ENCODE measurements at regions of chr12 and their contacts with region 1.

Region 1: DNA sequence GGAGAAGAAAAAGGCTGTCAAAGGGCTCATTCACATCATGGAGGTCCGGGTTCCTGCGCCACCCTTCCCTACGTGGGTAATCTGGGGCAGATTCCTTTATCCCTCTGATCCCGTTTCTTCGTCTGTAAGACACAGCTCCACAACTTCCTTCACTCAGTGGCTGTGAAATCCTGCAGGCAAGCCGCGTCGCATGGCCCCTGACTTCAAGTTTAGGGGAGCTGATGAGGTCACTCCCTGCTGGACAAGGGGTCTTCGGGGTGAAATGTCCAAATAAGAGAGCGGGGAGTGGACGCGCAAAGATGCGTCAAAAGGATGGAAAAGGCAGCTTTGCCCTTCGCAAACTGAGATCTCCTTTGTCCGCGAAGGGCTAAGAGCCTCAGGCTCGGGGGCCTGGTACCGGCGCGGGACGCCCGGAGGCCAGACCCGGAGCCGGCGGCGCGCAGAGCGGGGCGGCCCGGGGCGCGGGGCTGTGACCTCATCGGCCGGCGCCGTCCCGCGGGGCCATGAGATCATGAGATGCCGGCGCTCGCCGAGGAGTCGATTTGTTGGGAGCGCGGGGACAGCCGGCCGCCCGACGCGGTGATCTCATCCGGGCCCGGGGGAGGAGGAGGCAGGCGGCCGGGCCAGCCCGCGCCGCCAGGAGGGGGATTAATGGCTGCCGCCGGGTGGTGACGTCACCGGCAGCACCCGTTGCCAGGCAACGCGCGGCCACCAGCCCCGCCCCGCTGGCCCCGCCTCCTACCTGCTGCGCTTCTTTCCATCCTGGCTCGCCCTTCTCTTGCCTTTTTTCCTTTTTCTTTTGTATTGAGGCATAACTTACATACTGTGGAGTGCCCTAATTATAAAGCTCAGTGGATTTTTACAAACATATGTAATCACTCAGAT is 62.1 kb downstream of the HRK start:
- DNase-seq: peak; percentile 85
- H3K4me3 ChIP-seq: peak overlapping the region; percentile 57 to 60
- H3K27ac ChIP-seq: peak overlapping the region; percentile 84 to 88
- H3K4me1 ChIP-seq: no peaks in the 10 kb centered on the region
- H3K27me3 ChIP-seq: no peaks in the 10 kb centered on the region
- CTCF ChIP-seq: peak in 2 of 4 experiments; percentile 36 to 48
- POLR2A ChIP-seq: peak; percentile 54

Region 2: DNA sequence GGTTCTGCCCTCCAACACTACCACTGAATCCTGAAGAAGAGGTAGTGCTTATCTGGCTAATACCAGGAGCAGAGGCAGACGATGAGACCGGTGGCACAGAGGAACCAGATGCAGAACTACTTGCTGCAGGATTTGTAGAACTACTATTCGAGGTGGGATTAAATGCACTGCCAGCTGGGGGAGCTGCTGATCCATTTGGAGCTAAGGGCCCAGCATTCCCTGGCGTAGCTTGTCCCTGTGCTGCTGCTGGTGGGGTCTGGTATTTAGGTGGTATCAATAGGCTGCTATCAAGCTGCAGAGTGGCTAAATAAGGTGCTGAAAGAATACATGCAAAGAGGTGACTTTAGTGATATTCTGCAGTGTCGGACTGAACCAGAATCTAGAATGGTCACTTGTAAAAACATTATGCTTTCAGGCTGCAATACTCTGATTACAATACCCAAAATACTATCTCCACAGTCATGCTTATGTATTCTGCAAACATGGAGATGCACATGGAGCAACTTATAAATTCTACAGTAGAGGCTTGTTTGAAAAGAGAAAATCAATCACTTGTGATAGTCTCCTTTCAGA is 835.9 kb before region 1 on chr12:
- intact Hi-C with region 1: no loop called
- DNase-seq: no peak
- H3K4me3 ChIP-seq: no peak overlapping the region
- H3K27ac ChIP-seq: no peak overlapping the region
- H3K4me1 ChIP-seq: no peaks in the 10 kb centered on the region
- H3K27me3 ChIP-seq: no peaks in the 10 kb centered on the region
- CTCF ChIP-seq: peak in 3 of 4 experiments; percentile 8 to 31 (median 16)
- POLR2A ChIP-seq: no peak

Region 3: DNA sequence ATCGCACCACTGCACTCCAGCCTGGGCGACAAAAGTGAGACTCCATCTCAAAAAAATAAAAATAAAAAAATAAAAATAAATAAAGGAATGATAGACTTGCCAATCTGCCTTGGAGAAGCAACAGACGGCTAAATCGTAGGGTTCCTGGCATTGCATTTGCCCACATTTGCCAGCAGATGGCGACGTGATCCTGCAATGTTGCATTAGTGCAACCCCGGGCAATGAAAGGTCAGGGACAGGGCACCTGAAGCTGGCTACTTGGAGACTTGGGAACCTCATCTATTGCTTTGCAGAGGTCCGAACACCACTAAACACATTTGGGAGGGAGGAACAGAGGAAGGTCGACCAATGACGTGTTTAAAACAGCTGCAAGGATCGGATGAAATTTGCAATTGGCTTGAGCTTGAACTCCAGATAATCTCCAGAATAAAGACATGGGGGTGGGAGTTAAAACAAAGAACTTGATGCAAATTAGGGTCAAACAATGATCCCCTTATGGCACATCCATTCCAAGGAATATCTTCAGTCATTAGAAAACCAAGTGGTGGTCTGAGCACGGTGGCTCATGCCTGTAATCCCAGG is 115.9 kb before region 1 on chr12:
- intact Hi-C with region 1: no loop called
- DNase-seq: peak; percentile 46
- H3K4me3 ChIP-seq: no peak overlapping the region
- H3K27ac ChIP-seq: no peak overlapping the region
- H3K4me1 ChIP-seq: no peaks in the 10 kb centered on the region
- H3K27me3 ChIP-seq: no peaks in the 10 kb centered on the region
- CTCF ChIP-seq: peak; percentile 54 to 88 (median 86)
- POLR2A ChIP-seq: no peak

Region 4: DNA sequence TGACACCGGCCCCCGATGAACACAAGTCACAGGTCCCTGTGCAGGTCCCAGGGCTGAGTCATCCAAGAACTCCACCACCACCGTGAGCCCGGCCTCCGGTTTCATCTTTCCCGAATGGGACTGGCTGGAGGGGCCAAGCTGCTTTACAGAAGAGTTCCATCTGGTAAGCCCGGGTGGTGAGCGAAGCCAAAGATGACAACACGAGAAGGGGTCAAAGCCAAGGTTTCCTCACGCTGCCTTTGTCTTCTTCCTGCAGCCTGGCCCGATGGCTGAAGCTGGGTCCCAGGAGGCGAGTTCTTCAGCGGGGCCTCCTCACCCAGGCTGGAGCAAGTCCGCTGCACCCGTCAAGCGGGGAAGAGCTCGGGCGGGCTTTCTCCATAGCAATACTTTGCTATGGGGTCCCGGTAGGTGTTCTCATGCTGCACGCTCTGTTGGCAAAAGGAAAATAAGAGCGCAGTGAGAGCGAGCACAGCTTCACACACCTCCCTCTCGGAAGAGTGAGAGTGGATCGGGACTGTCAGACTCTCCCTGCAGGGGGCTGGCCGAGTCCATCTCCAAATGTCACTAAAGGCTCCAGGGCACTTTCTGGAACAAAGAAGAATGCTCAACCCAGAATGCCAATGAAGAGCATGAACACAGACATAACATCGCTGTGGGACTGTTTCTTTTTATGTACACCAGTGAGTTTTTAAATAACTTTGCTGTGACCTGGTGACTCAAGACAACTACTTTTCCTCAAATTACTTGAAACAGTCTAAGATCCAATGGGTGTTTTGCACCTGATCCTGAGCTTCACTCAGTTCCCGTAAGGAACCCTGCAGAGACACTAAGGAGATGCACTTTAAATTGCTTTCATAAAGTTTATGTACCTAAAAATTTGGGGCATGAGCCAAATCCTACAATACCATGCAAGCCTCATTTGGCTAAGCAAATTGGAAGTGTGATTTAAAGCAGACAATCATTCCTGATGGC is 101.4 kb before region 1 on chr12:
- intact Hi-C with region 1: loop called (anchors 5 kb)
- DNase-seq: no peak
- H3K4me3 ChIP-seq: no peak overlapping the region
- H3K27ac ChIP-seq: no peak overlapping the region
- H3K4me1 ChIP-seq: no peaks in the 10 kb centered on the region
- H3K27me3 ChIP-seq: no peaks in the 10 kb centered on the region
- CTCF ChIP-seq: no peak
- POLR2A ChIP-seq: no peak

Region 5: DNA sequence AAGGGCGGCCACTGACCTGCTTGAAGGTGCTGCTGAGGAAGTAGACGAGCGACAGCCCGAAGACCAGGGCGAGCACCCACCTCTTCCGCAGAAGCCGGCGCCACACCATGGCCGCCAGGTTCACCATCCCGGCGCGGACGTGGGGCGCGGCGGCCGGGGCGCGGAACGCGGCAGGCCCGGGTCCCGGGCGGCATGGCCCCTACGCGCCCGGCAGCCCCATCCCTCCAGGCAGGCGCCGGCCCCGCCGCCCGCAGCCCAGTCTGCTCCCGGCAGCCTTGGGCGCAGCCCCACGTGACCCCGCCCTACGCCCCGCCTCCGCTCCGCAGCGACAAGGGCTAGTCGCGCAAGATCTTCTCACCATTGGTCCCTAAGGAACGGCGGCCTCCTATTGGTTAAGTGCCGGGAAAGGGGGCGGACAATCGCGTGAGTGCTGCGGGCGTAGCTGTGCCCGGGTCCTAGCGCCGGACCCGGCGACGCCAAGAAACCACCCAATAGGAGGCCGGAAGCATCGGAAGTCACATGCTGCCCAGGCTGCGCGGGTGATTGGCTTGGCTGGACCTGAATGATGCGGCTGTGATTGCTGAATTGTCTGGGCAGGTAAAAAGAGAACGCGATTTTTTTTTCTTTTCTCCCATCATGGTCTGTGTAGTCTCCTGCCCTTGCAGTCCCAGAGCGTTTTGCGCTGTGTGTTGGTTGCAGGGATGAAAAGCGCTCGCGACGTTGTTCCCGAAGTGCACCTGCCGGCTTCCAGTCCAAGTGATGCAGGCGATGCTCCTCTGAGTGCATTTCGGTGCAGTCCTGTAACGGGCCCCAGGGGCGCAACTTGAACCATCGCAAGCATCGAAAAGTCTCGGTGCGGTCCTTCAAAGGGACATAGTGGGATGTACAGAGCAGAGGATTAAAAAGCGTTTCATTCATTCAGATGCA is 81.2 kb before region 1 on chr12 and contains the starts of genes RNFT2 and SPRING1:
- intact Hi-C with region 1: loop called (anchors 5 kb)
- DNase-seq: peak; percentile 99
- H3K4me3 ChIP-seq: peak within 1 kb of the TSS; percentile 85 to 86
- H3K27ac ChIP-seq: peak within 1 kb of the TSS; percentile 45 to 69
- H3K4me1 ChIP-seq: peaks cover 8% of the 10 kb centered on the region
- H3K27me3 ChIP-seq: no peaks in the 10 kb centered on the region
- CTCF ChIP-seq: peak in 2 of 4 experiments; percentile 22 to 28
- POLR2A ChIP-seq: peak; percentile 84
- total RNA-seq, gene RNFT2: 0.32 to 4.7 TPM
- total RNA-seq, gene SPRING1: 12.9 to 21.0 TPM

Region 6: DNA sequence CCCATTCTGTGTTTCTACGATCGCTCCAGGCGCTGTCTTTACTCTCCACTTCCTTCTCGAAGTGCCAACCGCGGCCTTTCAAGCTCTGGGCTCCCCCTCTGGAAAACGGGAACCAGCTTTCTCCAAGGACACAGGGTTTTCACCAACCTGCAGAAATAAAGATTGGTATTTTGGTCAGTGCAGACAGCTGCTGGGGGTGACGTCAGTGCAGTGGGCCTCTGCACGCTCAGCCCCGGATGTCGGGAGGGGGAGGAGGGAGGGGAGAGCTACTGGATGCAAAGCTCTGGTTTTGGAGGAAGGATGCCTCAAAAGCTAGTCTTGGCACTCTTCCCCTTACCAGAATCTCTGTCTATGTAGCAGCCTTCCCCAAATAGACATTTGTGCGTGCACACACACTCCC is 42.1 kb after region 1 on chr12:
- intact Hi-C with region 1: no loop called
- DNase-seq: no peak
- H3K4me3 ChIP-seq: no peak overlapping the region
- H3K27ac ChIP-seq: no peak overlapping the region
- H3K4me1 ChIP-seq: no peaks in the 10 kb centered on the region
- H3K27me3 ChIP-seq: no peaks in the 10 kb centered on the region
- CTCF ChIP-seq: no peak
- POLR2A ChIP-seq: no peak

Measured in prostate gland (tissue), 2 donors.